Breast epithelium (tissue), 4 donors: ENCODE measurements at regions of chr12 and their contacts with region 1.

Region 1: GRCh38 chr12:64890873-64891468 is 66.5 kb downstream of the TBC1D30 start:
- DNase-seq: no peak
- H3K4me3 ChIP-seq: no peak overlapping the region
- H3K27ac ChIP-seq: no peak overlapping the region
- H3K4me1 ChIP-seq: no peaks in the 10 kb centered on the region
- H3K27me3 ChIP-seq: no peaks in the 10 kb centered on the region
- CTCF ChIP-seq: peak; percentile 89 to 91 (median 91)
- POLR2A ChIP-seq: no peak

Region 2: DNA sequence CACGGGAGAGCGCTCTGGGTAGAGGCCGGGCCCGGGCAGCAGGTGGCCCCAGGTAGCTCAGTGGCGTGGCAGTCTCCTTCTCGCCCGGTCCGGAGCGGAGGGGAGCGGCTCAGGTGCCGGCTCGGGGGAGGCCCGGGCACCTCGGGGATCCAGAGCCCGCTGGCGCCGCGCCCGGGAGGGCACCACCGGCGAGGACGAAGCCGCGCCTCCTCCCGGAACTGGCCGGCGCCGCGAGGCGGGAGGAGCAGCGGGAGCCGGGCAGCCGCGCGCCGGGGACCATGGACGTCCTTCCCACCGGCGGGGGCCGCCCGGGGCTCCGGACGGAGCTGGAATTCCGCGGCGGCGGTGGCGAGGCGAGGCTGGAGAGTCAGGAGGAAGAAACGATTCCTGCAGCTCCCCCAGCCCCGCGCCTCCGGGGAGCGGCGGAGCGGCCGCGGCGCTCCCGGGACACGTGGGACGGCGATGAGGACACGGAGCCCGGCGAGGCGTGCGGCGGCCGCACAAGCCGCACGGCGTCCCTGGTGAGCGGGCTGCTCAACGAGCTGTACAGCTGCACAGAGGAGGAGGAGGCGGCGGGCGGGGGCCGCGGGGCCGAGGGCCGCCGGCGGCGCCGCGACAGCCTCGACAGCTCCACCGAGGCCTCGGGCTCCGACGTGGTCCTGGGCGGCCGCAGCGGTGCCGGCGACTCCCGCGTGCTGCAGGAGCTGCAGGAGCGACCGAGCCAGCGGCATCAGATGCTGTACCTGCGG is 110.3 kb before region 1 on chr12:
- intact Hi-C with region 1: no loop called
- DNase-seq: peak in 1 of 2 donors; percentile 39
- H3K4me3 ChIP-seq: peak overlapping the region; percentile 55 to 74 (median 64)
- H3K27ac ChIP-seq: peak overlapping the region; percentile 73 to 81
- H3K4me1 ChIP-seq: no peaks in the 10 kb centered on the region
- H3K27me3 ChIP-seq: no peaks in the 10 kb centered on the region
- CTCF ChIP-seq: no peak
- POLR2A ChIP-seq: no peak

Region 3: DNA sequence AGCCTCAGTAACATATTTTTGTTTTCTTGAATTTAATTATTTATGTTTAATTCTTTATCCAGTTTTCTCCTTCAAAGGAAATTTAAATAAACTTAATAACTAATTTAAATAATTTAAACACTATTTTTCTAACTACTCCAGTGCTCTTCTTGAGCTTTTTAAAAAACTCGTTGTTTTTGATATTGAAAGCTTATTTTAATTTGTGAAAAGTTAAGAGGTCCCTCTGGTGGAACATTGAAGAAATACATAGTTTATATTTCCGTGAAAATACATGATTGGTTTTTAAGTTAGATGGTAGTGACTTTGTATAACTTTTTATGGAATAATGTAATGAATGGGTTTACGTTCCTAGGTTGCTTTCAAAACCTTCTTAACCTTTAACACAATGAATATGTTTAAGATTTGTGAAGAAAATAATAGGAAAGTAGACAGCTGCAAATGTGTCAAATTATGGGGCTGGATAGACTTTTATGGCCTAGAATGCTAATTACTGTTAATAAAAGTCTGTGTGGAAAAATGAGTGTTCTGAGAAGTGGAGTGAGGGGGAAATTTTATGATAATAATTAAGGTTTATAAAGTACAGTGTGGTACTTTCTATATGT is 341.6 kb after region 1 on chr12:
- intact Hi-C with region 1: loop called (anchors 10 kb)
- DNase-seq: no peak
- H3K4me3 ChIP-seq: no peak overlapping the region
- H3K27ac ChIP-seq: no peak overlapping the region
- H3K4me1 ChIP-seq: no peaks in the 10 kb centered on the region
- H3K27me3 ChIP-seq: no peaks in the 10 kb centered on the region
- CTCF ChIP-seq: peak in 2 of 3 donors; percentile 38 to 40
- POLR2A ChIP-seq: no peak